ENCODE measurements at regions of chr1 and their contacts with region 1.

Region 1: GRCh38 chr1:156625436-156626078 is 6.3 kb downstream of the HAPLN2 start:
- DNase-seq: no peak
- H3K4me3 ChIP-seq: peak overlapping the region; percentile 31 to 62
- H3K27ac ChIP-seq: no peak overlapping the region
- H3K4me1 ChIP-seq: peaks cover 8 to 17% of the 10 kb centered on the region in 2 donors
- H3K27me3 ChIP-seq: peaks cover 29% of the 10 kb centered on the region
- CTCF ChIP-seq: peak; percentile 67 to 80 (median 70)

Region 2: GRCh38 chr1:156677616-156678596 is 52.3 kb after region 1 on chr1:
- intact Hi-C with region 1: loop called (anchors 1 kb)
- DNase-seq: peak in 1 of 2 donors; percentile 81
- H3K4me3 ChIP-seq: peak overlapping the region; percentile 51 to 70
- H3K27ac ChIP-seq: peak overlapping the region; percentile 71 to 78
- H3K4me1 ChIP-seq: peaks cover 10 to 13% of the 10 kb centered on the region in 2 donors
- H3K27me3 ChIP-seq: no peaks in the 10 kb centered on the region
- CTCF ChIP-seq: peak; percentile 86 to 95 (median 94)

Measured in ascending aorta (tissue), 2 donors.